MCF 10A (cell line): ENCODE measurements at regions of chr1 and their contacts with region 1.

Region 1: GRCh38 chr1:225710804-225711203 is 57.9 kb upstream of the ENAH start:
- DNase-seq: peak; percentile 97
- H3K4me3 Mint-ChIP-seq: no peak overlapping the region
- H3K27ac Mint-ChIP-seq: peak overlapping the region; percentile 56
- H3K4me1 Mint-ChIP-seq: peaks cover 17% of the 10 kb centered on the region
- H3K27me3 Mint-ChIP-seq: no peaks in the 10 kb centered on the region
- CTCF ChIP-seq: no peak

Region 2: DNA sequence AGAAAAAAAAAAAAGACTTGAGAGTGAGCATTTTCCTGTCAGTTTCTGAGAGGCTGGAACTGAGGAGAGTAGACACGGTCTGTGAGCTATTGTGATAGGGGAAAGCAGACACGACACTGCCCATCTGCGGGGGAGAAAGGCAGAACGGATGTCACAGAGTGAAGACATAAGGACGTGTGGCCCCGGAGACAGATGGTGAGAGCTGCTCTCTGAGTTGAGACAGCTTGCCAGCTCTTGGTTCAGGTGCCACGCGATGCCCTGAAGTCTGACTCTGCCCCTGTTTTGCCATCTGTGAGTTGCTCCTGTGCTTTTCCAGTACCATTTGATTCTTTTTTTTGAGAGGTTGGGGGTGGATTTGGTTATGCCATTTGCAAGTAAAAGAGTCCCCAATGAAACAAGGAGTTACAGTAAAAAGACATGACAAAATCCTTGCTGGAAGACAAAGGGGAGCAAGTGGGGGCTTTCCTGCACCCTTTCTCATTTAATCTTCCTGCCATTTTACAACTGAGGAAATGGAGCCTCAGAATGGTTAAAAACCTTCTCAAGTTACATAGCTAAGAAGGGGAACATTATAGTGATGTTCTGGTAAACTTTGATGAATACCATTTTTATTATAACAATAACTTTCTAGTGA is 910.2 kb before region 1 on chr1:
- CTCF ChIA-PET with region 1: no interaction called
- POLR2A ChIA-PET with region 1: no interaction called
- intact Hi-C with region 1: no loop called
- DNase-seq: no peak
- H3K4me3 Mint-ChIP-seq: no peak overlapping the region
- H3K27ac Mint-ChIP-seq: no peak overlapping the region
- H3K4me1 Mint-ChIP-seq: no peaks in the 10 kb centered on the region
- H3K27me3 Mint-ChIP-seq: no peaks in the 10 kb centered on the region
- CTCF ChIP-seq: no peak

Region 3: DNA sequence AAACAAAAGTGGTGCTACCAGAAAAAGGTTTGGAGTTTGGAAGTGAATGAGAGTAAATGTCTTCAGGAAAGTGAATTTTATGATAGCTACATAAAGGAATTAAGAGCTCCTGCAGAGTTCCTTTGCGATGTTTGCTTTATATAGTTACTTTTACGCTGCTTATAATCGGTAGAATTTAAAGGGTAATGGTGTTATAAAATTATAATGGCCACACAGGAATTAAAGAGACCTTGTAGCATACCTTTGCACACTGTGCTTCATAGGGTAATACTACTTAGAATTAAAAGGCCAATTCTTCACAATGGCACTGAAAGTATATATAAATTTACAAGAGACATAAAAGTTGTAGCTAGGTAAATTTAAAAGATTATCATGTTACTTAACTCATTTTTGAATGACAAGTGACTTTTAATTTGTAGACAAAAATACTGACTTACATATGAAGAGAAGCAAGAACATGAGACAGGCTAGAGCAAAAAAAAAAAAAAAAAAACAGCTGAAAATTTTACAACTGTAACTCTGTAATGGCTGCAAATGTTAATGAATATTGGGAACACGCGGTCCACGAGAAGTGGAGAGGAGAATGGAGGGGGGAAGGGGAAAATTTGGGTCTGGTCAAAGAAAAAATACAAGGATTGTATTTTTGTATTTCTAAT is 217.1 kb before region 1 on chr1:
- CTCF ChIA-PET with region 1: no interaction called
- POLR2A ChIA-PET with region 1: no interaction called
- intact Hi-C with region 1: no loop called
- DNase-seq: no peak
- H3K4me3 Mint-ChIP-seq: no peak overlapping the region
- H3K27ac Mint-ChIP-seq: no peak overlapping the region
- H3K4me1 Mint-ChIP-seq: no peaks in the 10 kb centered on the region
- H3K27me3 Mint-ChIP-seq: no peaks in the 10 kb centered on the region
- CTCF ChIP-seq: no peak

Region 4: DNA sequence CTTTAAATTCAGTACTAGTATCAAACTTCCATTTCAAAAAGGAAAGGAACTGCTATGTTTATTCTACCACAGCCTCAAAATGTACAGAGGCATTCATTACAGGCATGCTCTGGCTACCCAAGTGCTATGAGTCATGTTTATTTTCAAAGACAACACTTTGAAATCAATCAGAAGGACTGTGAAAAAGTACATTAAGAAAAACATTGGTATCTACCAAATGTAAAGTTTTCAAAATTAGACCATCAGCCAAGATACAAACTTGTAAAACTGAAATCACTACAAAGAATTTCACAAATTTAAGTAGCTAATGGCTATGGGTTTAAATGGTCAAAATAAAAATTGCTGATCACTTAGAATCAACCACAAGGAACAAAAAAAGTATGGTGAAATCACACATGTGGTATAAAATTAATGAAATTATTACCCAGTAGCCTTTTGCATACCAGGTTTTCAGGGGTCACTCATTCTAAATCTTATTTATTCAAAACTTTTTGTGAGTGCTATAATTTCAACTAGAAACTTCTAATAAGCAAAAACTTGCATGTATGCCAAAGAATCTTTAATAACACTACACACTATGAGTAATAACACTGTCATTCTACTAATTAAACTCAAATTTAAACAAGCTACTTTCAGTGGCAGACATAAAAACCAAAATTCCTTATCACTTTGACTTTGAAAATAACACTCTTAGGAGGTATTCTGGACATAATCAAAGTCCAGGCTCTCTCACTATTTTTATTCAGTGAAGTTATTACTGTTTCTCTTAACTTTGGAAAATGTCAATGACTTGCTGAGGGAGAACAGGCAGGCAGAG is 107.1 kb before region 1 on chr1:
- CTCF ChIA-PET with region 1: interaction called, 5 read pairs
- POLR2A ChIA-PET with region 1: interaction called, 10 read pairs
- intact Hi-C with region 1: no loop called
- DNase-seq: peak; percentile 86
- H3K4me3 Mint-ChIP-seq: peak overlapping the region; percentile 68
- H3K27ac Mint-ChIP-seq: peak overlapping the region; percentile 95
- H3K4me1 Mint-ChIP-seq: peaks cover 61% of the 10 kb centered on the region
- H3K27me3 Mint-ChIP-seq: no peaks in the 10 kb centered on the region
- CTCF ChIP-seq: no peak

Region 5: GRCh38 chr1:225700164-225700740 is 10.6 kb before region 1 on chr1:
- CTCF ChIA-PET with region 1: interaction called, 6 read pairs
- POLR2A ChIA-PET with region 1: interaction called, 132 read pairs
- intact Hi-C with region 1: no loop called
- DNase-seq: peak; percentile 100
- H3K4me3 Mint-ChIP-seq: peak overlapping the region; percentile 68
- H3K27ac Mint-ChIP-seq: peak overlapping the region; percentile 94
- H3K4me1 Mint-ChIP-seq: peaks cover 26% of the 10 kb centered on the region
- H3K27me3 Mint-ChIP-seq: no peaks in the 10 kb centered on the region
- CTCF ChIP-seq: no peak

Region 6: GRCh38 chr1:225724251-225724650 is 13.4 kb after region 1 on chr1:
- CTCF ChIA-PET with region 1: interaction called, 4 read pairs
- POLR2A ChIA-PET with region 1: interaction called, 12 read pairs
- intact Hi-C with region 1: no loop called
- DNase-seq: no peak
- H3K4me3 Mint-ChIP-seq: no peak overlapping the region
- H3K27ac Mint-ChIP-seq: no peak overlapping the region
- H3K4me1 Mint-ChIP-seq: no peaks in the 10 kb centered on the region
- H3K27me3 Mint-ChIP-seq: no peaks in the 10 kb centered on the region
- CTCF ChIP-seq: no peak

Region 7: DNA sequence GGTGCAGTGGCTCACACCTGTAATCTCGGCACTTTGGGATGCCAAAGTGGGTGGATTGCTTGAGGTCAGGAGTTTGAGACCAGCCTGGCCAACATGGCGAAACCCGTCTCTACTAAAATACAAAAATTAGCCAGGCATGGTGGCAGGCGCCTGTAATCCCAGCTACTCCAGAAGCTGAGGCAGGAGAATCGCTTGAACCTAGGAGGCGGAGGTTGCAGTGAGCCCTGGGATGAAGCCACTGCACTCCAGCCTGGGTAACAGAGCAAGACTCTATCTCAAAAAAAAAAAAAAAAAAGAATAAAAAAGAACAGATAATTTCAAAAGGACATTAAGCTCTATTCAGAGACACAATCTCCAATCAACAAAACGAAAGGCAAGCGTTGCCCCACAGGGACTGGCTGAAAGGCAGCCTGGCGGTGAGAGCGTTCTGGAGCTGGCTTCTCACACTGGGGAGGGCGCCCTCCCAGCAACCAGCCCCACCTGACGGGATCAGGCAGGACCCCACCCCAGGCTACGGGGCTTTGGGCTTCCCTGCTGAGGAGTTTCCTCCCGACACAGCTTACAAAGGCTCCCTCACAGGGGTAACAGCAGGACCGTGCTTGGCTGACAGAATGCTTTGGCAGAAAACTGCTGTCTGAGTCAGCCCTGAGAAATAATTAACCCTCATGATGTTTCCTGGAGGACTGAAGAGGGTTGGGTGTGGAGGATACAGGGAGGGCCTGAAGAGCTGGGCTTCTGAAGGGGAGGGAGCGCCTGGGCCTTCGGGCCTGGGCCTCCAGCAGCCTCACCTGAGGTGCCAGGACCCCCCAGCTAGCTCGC is 35.8 kb after region 1 on chr1:
- CTCF ChIA-PET with region 1: interaction called, 11 read pairs
- POLR2A ChIA-PET with region 1: interaction called, 20 read pairs
- intact Hi-C with region 1: no loop called
- DNase-seq: peak; percentile 98
- H3K4me3 Mint-ChIP-seq: peak overlapping the region; percentile 66
- H3K27ac Mint-ChIP-seq: peak overlapping the region; percentile 90
- H3K4me1 Mint-ChIP-seq: peaks cover 35% of the 10 kb centered on the region
- H3K27me3 Mint-ChIP-seq: no peaks in the 10 kb centered on the region
- CTCF ChIP-seq: no peak

Region 8: DNA sequence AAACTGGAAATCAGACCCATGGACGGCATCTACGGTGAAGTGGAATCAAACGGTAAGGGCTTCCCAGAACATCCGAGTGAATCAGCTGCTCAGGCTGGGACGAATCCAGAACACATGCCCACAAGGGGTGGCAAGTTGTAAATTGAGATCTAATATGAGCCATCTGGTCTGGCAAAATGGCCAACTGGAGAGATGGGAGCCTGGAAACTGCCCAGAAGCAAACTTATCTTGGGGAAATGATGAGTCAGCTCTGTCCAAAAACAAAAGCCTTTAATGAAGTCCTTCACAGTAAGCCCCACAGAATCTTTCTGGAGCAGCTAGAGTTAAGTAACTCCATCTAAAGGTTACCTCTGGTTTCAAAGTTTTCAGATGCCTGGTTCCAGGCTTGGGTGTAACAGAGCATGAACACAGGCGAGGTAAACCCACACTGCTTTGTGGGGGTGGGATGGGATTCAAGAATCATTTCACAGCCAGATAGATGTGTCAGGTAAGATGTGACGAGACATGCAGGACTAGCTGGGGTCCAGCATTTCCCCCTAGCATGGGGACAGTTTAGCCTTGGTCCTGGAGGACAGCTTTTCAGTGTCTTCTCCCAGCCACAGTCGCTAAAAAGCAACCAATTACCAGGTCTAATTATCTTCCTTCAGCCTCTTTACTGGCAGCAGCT is 56.3 kb after region 1 on chr1:
- CTCF ChIA-PET with region 1: interaction called, 50 read pairs
- POLR2A ChIA-PET with region 1: interaction called, 16 read pairs
- intact Hi-C with region 1: no loop called
- DNase-seq: peak; percentile 99
- H3K4me3 Mint-ChIP-seq: peak overlapping the region; percentile 40
- H3K27ac Mint-ChIP-seq: peak overlapping the region; percentile 78
- H3K4me1 Mint-ChIP-seq: peaks cover 38% of the 10 kb centered on the region
- H3K27me3 Mint-ChIP-seq: no peaks in the 10 kb centered on the region
- CTCF ChIP-seq: no peak

Region 9: DNA sequence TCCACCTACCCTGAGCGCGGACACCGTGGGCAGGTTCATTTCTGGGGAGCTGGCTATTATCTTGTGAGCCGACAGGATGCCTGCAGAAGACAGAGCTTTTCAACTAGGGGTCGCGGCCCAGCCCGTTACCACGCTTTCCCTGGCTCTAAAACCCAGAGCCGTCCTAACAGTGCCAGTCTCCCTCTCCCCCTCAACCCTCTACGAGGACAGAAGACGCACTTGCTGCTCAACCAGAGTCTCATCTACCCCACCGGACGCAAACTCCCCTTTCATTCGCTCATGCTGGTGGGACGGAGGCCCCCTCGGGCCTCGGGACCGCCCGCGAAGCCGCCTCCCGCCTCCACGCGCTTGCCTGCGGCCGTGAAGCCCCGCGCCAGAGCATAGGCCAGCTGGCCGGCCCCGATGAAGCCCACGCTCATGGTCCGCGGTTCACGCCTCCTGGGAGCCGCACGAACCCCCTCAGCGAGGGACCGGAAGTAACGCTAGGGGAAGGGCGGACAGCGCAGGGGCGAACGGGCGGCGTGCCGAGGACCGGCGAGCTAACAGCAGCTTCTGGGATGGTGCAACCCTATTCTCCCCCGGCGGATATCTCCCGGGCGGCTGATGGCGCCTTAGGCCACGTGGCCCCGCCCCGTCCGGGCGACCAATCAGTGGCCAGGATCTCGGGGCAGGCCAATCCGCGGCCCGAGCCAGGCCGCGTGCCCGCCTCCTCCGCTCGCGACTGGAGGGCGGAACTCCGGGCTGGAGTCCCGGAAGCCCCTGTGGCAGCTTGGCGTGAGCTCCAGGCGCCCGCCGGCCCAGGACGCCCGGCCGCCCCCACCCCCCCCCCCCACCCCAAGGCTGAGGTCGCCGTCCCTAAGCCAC is 213.1 kb after region 1 on chr1 and contains the start of gene PYCR2:
- CTCF ChIA-PET with region 1: no interaction called
- POLR2A ChIA-PET with region 1: interaction called, 10 read pairs
- intact Hi-C with region 1: no loop called
- DNase-seq: peak; percentile 99
- H3K4me3 Mint-ChIP-seq: peak within 1 kb of the TSS; percentile 99
- H3K27ac Mint-ChIP-seq: peak within 1 kb of the TSS; percentile 95
- H3K4me1 Mint-ChIP-seq: peaks cover 42% of the 10 kb centered on the region
- H3K27me3 Mint-ChIP-seq: no peaks in the 10 kb centered on the region
- CTCF ChIP-seq: no peak
- total RNA-seq, gene PYCR2: 172 and 173 TPM in 2 replicates